CD8-positive, alpha-beta T cell (primary cell): ENCODE measurements at regions of chr11 and their contacts with region 1.

Region 1: DNA sequence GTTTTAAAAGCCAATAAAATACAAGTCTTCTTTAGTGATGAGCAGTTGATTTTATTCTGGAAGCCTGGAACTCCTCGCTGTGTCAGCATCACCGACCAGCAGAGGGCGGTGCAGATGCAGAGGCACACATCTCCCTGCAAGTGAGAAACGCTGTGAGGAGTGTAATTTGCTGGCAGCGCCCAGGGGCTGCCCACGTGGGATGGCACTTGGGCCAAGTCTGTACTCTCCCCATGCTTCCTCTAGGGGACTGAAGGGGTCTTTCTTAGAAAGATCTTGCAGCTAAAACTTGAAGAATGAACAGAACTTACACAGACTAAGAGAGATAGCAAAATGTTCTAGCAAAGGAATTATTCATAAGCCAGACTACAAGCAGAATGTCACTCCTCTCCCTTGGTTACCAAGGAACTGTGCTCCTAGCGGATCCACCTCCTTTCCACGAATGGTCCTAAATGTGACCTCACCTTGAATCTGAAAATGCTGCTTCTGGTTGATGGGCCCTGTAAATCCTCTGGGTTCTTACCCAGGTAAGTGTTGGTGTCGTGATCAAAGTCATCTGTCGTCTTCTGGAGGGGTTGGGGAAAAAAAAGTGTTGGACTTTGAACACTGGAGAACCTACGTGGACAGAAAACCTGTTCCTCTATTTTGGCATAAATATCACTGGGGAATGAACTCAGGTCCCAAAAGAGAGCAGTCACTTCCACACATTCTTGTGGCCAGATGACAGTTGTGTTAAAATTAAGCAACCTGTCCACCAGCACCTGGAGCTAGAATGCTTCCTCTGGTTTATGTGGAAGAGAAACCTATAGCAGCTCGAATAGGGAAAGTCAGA is 31.8 kb downstream of the CNTF start:
- DNase-seq: peak; percentile 53 to 85 (median 79)
- ATAC-seq: peak; percentile 98
- H3K4me3 ChIP-seq: no peak overlapping the region
- H3K4me3 Mint-ChIP-seq: no peak overlapping the region
- H3K27ac ChIP-seq: no peak overlapping the region
- H3K27ac Mint-ChIP-seq: no peak overlapping the region
- H3K4me1 ChIP-seq: no peaks in the 10 kb centered on the region
- H3K4me1 Mint-ChIP-seq: peaks cover 4% of the 10 kb centered on the region
- H3K27me3 ChIP-seq: no peaks in the 10 kb centered on the region
- H3K27me3 Mint-ChIP-seq: no peaks in the 10 kb centered on the region
- CTCF ChIP-seq: peak; percentile 82

Region 2: DNA sequence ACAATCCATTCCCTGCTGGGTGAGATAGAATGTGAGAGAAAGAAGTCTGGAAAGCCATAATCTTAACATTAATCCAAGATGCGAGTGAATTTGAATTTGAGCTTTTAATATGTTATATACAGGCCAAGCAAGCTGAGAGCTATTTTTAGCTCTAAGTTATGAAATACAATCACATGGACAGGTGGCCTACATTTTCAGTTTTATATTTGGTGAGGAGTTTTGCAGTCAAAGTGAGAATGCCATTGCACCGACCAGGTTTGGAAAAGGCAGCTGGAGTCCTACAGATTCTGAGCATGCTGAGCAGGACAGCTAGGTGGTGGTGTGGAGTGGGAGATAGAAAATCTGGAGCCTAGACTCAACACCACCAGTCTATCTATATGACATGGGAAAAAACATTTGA is 158.4 kb before region 1 on chr11:
- CTCF ChIA-PET with region 1: no interaction called
- POLR2A ChIA-PET with region 1: no interaction called
- intact Hi-C with region 1: no loop called
- DNase-seq: no peak
- ATAC-seq: no peak
- H3K4me3 ChIP-seq: no peak overlapping the region
- H3K4me3 Mint-ChIP-seq: no peak overlapping the region
- H3K27ac ChIP-seq: no peak overlapping the region
- H3K27ac Mint-ChIP-seq: peak overlapping the region; percentile 1
- H3K4me1 ChIP-seq: peaks cover 40% of the 10 kb centered on the region
- H3K4me1 Mint-ChIP-seq: peaks cover 40% of the 10 kb centered on the region
- H3K27me3 ChIP-seq: no peaks in the 10 kb centered on the region
- H3K27me3 Mint-ChIP-seq: no peaks in the 10 kb centered on the region
- CTCF ChIP-seq: no peak

Region 3: DNA sequence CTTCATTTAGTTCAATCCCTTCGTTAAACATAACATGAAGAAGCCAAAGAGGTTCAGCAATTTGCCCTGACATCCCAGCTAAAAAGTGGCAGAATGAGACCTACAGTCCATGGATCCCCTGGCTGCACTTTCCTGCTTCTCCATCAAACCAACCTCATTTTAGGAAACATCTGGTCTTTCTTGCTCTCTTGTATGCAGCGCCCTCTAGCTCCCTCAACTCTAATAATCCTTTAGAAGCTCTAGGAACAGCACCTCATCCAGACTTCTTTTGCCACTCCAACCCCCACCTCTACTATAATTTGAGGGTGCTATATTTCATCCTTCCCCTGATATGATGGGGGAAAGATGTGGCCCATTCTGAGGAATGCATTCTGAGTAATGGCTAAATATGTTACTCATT is 24.4 kb before region 1 on chr11:
- CTCF ChIA-PET with region 1: interaction called, 31 read pairs
- POLR2A ChIA-PET with region 1: no interaction called
- intact Hi-C with region 1: no loop called
- DNase-seq: peak in 3 of 9 experiments; percentile 11 to 57 (median 43)
- ATAC-seq: no peak
- H3K4me3 ChIP-seq: no peak overlapping the region
- H3K4me3 Mint-ChIP-seq: no peak overlapping the region
- H3K27ac ChIP-seq: no peak overlapping the region
- H3K27ac Mint-ChIP-seq: no peak overlapping the region
- H3K4me1 ChIP-seq: no peaks in the 10 kb centered on the region
- H3K4me1 Mint-ChIP-seq: no peaks in the 10 kb centered on the region
- H3K27me3 ChIP-seq: no peaks in the 10 kb centered on the region
- H3K27me3 Mint-ChIP-seq: no peaks in the 10 kb centered on the region
- CTCF ChIP-seq: peak; percentile 53

Region 4: DNA sequence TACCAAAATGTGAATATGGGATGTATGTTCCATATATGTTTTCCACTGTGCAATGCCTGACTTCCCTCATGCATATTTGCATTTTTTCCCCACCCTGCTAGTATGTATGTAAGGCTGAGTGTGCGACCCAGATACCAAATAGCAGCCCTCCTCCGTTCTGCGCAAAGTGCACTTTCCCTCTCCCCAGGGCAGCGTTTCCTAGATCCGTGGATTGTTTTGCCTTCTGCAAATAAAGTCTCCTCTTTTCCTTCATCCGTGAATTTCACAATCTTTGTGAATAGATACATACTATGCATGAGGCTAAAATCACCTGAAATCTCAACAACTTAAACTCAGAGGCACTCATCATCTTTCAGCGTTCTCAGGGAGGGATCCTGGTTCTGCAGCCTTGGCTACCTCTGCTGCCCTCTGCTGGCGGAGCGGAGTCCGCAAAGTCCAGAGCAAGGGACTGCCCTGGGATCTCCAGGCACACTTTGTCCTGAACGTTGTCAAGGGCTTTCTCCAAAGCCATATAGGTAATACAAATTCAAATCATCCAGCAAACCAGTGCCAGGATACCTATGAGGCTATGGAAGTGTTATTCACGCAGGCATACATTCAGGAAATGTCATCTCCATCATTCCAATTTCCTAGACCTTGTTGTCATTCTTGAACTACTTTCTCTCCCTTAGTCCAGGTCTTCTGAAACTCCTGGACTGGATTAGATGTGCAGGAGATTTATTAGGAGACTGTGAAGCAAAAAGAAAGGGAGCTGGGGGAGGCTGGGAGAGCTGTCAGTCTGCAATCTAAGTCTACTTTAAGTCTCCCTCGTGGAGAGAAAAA is 21.3 kb after region 1 on chr11:
- CTCF ChIA-PET with region 1: interaction called, 27 read pairs
- POLR2A ChIA-PET with region 1: interaction called, 4 read pairs
- intact Hi-C with region 1: loop called (anchors 1 kb)
- DNase-seq: peak; percentile 46 to 86 (median 72)
- ATAC-seq: peak; percentile 80
- H3K4me3 ChIP-seq: no peak overlapping the region
- H3K4me3 Mint-ChIP-seq: no peak overlapping the region
- H3K27ac ChIP-seq: no peak overlapping the region
- H3K27ac Mint-ChIP-seq: no peak overlapping the region
- H3K4me1 ChIP-seq: no peaks in the 10 kb centered on the region
- H3K4me1 Mint-ChIP-seq: no peaks in the 10 kb centered on the region
- H3K27me3 ChIP-seq: no peaks in the 10 kb centered on the region
- H3K27me3 Mint-ChIP-seq: no peaks in the 10 kb centered on the region
- CTCF ChIP-seq: peak; percentile 93

Region 5: DNA sequence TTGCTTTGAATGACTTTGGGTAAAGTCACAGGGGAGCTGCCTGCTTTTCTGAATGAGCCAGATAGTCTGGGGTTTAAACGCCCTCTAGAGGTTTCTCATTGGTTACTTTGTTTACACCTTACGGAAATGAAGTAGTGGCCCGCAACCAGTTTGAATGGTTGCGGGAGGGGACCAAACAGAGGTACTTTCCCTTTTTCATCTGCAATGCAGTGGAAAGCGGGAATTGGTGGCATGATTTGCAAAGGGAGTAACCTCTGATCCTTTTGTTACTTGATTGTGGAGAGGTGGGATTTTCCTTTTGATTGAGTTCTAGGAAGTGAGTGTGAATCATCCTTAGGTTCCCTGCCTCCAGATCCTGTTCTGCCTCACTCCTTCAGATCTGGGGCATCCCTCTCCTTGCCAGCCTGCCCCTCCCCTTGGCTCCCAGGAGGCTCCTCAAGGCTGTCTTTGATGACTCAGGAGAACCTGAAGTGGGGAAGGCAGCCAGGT is 269.1 kb after region 1 on chr11:
- CTCF ChIA-PET with region 1: interaction called, 3 read pairs
- POLR2A ChIA-PET with region 1: no interaction called
- intact Hi-C with region 1: loop called in 1 of 2 experiments (anchors 10 kb)
- DNase-seq: peak in 2 of 9 experiments; percentile 14 to 43
- ATAC-seq: peak; percentile 48
- H3K4me3 ChIP-seq: no peak overlapping the region
- H3K4me3 Mint-ChIP-seq: no peak overlapping the region
- H3K27ac ChIP-seq: no peak overlapping the region
- H3K27ac Mint-ChIP-seq: no peak overlapping the region
- H3K4me1 ChIP-seq: peaks cover 9% of the 10 kb centered on the region
- H3K4me1 Mint-ChIP-seq: peaks cover 20% of the 10 kb centered on the region
- H3K27me3 ChIP-seq: no peaks in the 10 kb centered on the region
- H3K27me3 Mint-ChIP-seq: no peaks in the 10 kb centered on the region
- CTCF ChIP-seq: peak; percentile 25

Region 6: GRCh38 chr11:59062602-59063529 is 408.6 kb after region 1 on chr11:
- CTCF ChIA-PET with region 1: no interaction called
- POLR2A ChIA-PET with region 1: no interaction called
- intact Hi-C with region 1: loop called (anchors 10 kb)
- DNase-seq: no peak
- ATAC-seq: no peak
- H3K4me3 ChIP-seq: no peak overlapping the region
- H3K4me3 Mint-ChIP-seq: no peak overlapping the region
- H3K27ac ChIP-seq: no peak overlapping the region
- H3K27ac Mint-ChIP-seq: no peak overlapping the region
- H3K4me1 ChIP-seq: no peaks in the 10 kb centered on the region
- H3K4me1 Mint-ChIP-seq: peaks cover 10% of the 10 kb centered on the region
- H3K27me3 ChIP-seq: peaks cover 0 to 6% of the 10 kb centered on the region in 2 experiments
- H3K27me3 Mint-ChIP-seq: peaks cover 52% of the 10 kb centered on the region
- CTCF ChIP-seq: no peak